ENCODE measurements at regions of chr2 and their contacts with region 1.

Region 1: GRCh38 chr2:206085742-206086445 is at the start of gene INO80D:
- DNase-seq: peak; percentile 66 to 76
- ATAC-seq: peak; percentile 83 to 93 (median 88)
- H3K4me3 ChIP-seq: peak within 1 kb of the TSS; percentile 85 to 97 (median 92)
- H3K27ac ChIP-seq: peak within 1 kb of the TSS; percentile 96 to 99 (median 98)
- H3K4me1 ChIP-seq: peaks cover 0 to 34% (median 23%) of the 10 kb centered on the region in 9 donors
- H3K27me3 ChIP-seq: no peaks in the 10 kb centered on the region
- CTCF ChIP-seq: peak in 8 of 9 donors; percentile 22 to 70 (median 53)
- total RNA-seq, gene INO80D: 12.5 to 26.3 (median 16.4) TPM

Region 2: GRCh38 chr2:207692206-207693065 is 1606.5 kb after region 1 on chr2:
- intact Hi-C with region 1: loop called in 1 of 10 experiments (anchors 5 kb)
- DNase-seq: peak in 1 of 2 donors; percentile 51
- ATAC-seq: peak in 3 of 8 donors; percentile 33 to 73 (median 59)
- H3K4me3 ChIP-seq: no peak overlapping the region
- H3K27ac ChIP-seq: peak overlapping the region in 4 of 10 donors; percentile 11 to 49 (median 30)
- H3K4me1 ChIP-seq: peaks cover 0 to 19% (median 9%) of the 10 kb centered on the region in 9 donors
- H3K27me3 ChIP-seq: no peaks in the 10 kb centered on the region
- CTCF ChIP-seq: peak; percentile 10 to 63 (median 48)

Measured in heart right ventricle (tissue), 16 donors.